ENCODE measurements at regions of chr6 and their contacts with region 1.

Region 1: DNA sequence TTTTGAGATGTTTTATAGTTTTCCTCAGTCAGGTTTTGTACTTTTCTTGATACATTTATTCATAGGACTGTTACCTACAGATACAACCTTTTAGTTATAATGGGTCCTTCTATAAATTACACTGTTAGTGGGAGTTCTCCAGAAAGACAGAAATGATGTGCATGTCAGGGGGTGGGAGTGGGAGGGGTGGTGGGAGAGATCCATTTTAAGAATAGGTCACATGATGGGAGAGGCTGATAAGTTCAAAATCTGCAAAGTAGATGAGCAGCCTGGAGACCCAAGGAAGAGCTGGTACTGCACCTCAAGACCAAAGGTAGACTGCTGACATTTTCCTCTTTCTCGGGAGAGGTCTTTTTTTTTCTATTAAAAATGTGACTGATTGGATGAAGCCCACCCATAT is 408.0 kb upstream of the GJE1 start:
- DNase-seq: no peak
- ATAC-seq: no peak
- H3K4me3 ChIP-seq: no peak overlapping the region
- H3K27ac ChIP-seq: no peak overlapping the region
- H3K4me1 ChIP-seq: no peaks in the 10 kb centered on the region
- H3K27me3 ChIP-seq: no peaks in the 10 kb centered on the region
- CTCF ChIP-seq: no peak

Region 2: GRCh38 chr6:141316236-141316635 is 408.5 kb before region 1 on chr6:
- intact Hi-C with region 1: loop called in 1 of 2 experiments (anchors 5 kb)
- DNase-seq: no peak
- ATAC-seq: no peak
- H3K4me3 ChIP-seq: no peak overlapping the region
- H3K27ac ChIP-seq: no peak overlapping the region
- H3K4me1 ChIP-seq: no peaks in the 10 kb centered on the region
- H3K27me3 ChIP-seq: no peaks in the 10 kb centered on the region
- CTCF ChIP-seq: no peak